ENCODE measurements at regions of chr6 and their contacts with region 1.

Region 1: DNA sequence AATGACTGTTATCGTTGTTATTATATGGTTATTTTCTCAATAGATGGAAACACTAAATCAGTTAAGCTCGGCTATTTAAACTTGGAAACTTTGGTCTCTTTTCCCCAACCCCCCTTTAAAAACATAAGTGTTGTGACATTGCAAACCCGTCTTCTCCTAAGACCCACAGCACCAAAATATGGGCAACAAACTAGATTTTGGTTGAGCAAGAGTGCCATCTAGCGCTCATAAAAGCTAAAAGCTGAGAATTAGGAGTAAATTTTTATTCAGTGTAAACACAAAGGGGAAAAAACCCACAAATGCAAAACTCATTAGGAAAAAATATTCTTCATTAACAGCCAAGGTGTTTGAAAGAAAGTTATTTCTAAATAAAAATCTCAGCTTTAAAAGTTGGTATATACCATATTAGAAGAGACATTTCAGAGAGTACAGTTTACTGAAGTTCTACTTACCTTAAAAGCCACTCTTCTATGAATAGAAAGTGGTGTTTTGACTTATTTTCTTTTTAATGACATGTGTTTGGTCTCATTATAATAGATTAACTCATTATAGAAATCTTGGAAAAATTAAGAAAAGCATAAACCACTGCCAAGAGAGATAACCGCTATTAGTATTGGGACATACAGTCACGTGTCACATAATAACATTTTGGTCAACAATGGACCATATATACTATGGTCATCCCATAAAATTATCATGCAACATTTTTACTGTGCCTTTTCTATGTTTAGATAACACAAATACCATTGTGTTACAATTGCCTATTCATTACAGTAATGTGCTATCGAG is 21.1 kb downstream of the SESN1 start:
- DNase-seq: peak in 8 of 9 experiments; percentile 8 to 87 (median 50)
- ATAC-seq: peak; percentile 69
- H3K4me3 ChIP-seq: no peak overlapping the region
- H3K4me3 Mint-ChIP-seq: no peak overlapping the region
- H3K27ac ChIP-seq: no peak overlapping the region
- H3K27ac Mint-ChIP-seq: no peak overlapping the region
- H3K4me1 ChIP-seq: peaks cover 23% of the 10 kb centered on the region
- H3K4me1 Mint-ChIP-seq: peaks cover 33% of the 10 kb centered on the region
- H3K27me3 ChIP-seq: no peaks in the 10 kb centered on the region
- H3K27me3 Mint-ChIP-seq: no peaks in the 10 kb centered on the region
- CTCF ChIP-seq: peak; percentile 91

Region 2: DNA sequence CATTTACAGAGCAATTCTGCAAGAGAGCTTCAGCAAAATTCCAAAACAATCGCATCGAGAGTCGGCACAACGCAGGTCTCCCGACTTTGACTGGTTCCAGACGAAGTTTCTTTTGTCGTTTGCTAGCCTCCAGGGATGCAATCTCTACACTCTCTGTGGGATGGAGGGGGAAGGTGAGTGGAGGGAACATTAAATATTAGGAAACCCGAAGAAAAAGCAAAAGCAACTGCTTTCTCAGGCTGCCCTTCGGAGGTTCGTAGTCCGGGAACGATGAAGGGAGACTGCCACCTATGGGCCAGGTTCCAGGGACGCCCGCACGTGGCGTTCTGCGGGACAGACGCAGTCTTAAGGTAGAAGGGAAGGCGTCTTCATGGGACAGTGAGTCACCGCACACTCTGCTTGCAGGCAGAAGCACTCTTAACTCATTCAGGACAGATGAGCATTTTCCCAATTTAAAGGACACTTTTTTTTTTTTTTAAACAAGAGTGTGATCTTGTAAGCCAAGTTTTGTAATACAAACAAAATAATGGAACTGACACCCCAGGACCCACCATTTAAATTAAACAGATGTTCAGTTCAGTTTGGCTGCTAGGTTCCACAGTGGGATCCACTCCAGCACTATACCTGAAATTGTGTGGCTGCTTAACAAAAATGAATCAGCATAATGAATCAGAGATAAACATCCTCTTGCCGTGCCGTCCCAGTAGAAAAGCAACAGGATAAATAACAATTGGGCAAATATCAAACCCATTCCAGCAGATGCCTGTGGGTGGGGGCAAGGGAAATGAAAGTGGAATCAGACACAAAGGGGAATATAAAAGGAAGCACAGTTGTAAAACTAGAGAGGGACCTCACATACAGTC is 291.1 kb before region 1 on chr6:
- CTCF ChIA-PET with region 1: interaction called, 11 read pairs
- POLR2A ChIA-PET with region 1: no interaction called
- intact Hi-C with region 1: loop called (anchors 1 to 2 kb)
- DNase-seq: peak; percentile 55 to 86 (median 78)
- ATAC-seq: peak; percentile 100
- H3K4me3 ChIP-seq: peak overlapping the region; percentile 56
- H3K4me3 Mint-ChIP-seq: peak overlapping the region; percentile 85
- H3K27ac ChIP-seq: no peak overlapping the region
- H3K27ac Mint-ChIP-seq: no peak overlapping the region
- H3K4me1 ChIP-seq: peaks cover 6% of the 10 kb centered on the region
- H3K4me1 Mint-ChIP-seq: peaks cover 8% of the 10 kb centered on the region
- H3K27me3 ChIP-seq: no peaks in the 10 kb centered on the region
- H3K27me3 Mint-ChIP-seq: no peaks in the 10 kb centered on the region
- CTCF ChIP-seq: peak; percentile 69

Region 3: GRCh38 chr6:108896111-108896661 is 177.4 kb before region 1 on chr6:
- CTCF ChIA-PET with region 1: interaction called, 22 read pairs
- POLR2A ChIA-PET with region 1: no interaction called
- intact Hi-C with region 1: loop called in 1 of 2 experiments (anchors 1 kb)
- DNase-seq: peak in 2 of 9 experiments; percentile 75 to 86
- ATAC-seq: peak; percentile 79
- H3K4me3 ChIP-seq: no peak overlapping the region
- H3K4me3 Mint-ChIP-seq: peak overlapping the region; percentile 49
- H3K27ac ChIP-seq: peak overlapping the region in 1 of 2 experiments; percentile 73
- H3K27ac Mint-ChIP-seq: peak overlapping the region; percentile 83
- H3K4me1 ChIP-seq: peaks cover 14% of the 10 kb centered on the region
- H3K4me1 Mint-ChIP-seq: peaks cover 38% of the 10 kb centered on the region
- H3K27me3 ChIP-seq: no peaks in the 10 kb centered on the region
- H3K27me3 Mint-ChIP-seq: no peaks in the 10 kb centered on the region
- CTCF ChIP-seq: no peak

Region 4: DNA sequence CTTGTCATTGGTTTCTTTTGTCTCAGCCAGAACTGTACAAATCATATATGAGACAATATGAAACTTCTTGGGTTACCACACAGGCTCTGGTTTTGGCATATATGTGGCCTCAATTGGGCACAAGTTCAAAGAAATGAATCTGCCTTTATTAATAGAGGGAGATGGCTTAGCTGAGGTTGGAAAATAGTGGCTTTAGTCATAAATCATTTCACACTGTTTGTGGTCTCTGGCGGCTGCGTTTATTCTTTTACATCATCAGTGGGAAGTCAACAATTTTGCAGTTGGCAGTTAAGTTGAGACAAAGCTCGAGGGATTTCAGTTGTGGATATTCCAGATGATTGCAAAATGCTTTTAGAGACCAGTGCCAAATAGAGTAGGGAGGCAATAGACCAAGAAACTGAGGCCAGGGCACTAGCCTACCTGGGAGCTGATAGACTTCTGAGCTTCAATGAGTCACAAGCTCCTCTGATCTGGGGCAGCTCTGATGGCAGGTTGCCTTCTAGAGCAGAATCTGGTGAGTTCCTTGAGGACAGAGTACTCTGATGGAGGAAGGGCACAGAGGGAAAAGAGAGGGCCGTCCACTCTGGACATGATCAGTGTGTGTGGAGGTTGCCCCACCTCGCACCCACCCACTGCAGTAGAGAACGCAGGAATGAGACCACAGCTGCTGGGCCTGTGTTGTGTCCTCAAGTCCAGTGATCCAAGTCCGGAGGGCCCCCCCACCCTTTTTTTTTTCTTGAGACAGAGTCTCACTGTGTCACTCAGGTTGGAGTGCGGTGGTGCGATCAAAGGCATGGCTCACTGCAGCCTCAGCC is 151.8 kb before region 1 on chr6:
- CTCF ChIA-PET with region 1: interaction called, 50 read pairs
- POLR2A ChIA-PET with region 1: interaction called, 8 read pairs
- intact Hi-C with region 1: no loop called
- DNase-seq: peak in 1 of 9 experiments; percentile 32
- ATAC-seq: no peak
- H3K4me3 ChIP-seq: no peak overlapping the region
- H3K4me3 Mint-ChIP-seq: no peak overlapping the region
- H3K27ac ChIP-seq: no peak overlapping the region
- H3K27ac Mint-ChIP-seq: no peak overlapping the region
- H3K4me1 ChIP-seq: peaks cover 19% of the 10 kb centered on the region
- H3K4me1 Mint-ChIP-seq: peaks cover 50% of the 10 kb centered on the region
- H3K27me3 ChIP-seq: no peaks in the 10 kb centered on the region
- H3K27me3 Mint-ChIP-seq: no peaks in the 10 kb centered on the region
- CTCF ChIP-seq: no peak

Region 5: GRCh38 chr6:109036574-109037294 is 36.8 kb before region 1 on chr6:
- CTCF ChIA-PET with region 1: interaction called, 11 read pairs
- POLR2A ChIA-PET with region 1: interaction called, 5 read pairs
- intact Hi-C with region 1: no loop called
- DNase-seq: peak in 2 of 9 experiments; percentile 42 to 64
- ATAC-seq: peak; percentile 64
- H3K4me3 ChIP-seq: no peak overlapping the region
- H3K4me3 Mint-ChIP-seq: no peak overlapping the region
- H3K27ac ChIP-seq: peak overlapping the region in 1 of 2 experiments; percentile 45
- H3K27ac Mint-ChIP-seq: peak overlapping the region; percentile 64
- H3K4me1 ChIP-seq: peaks cover 22% of the 10 kb centered on the region
- H3K4me1 Mint-ChIP-seq: peaks cover 50% of the 10 kb centered on the region
- H3K27me3 ChIP-seq: no peaks in the 10 kb centered on the region
- H3K27me3 Mint-ChIP-seq: no peaks in the 10 kb centered on the region
- CTCF ChIP-seq: no peak

Measured in CD8-positive, alpha-beta T cell (primary cell).